CD8-positive, alpha-beta T cell (primary cell): ENCODE measurements at regions of chr6 and their contacts with region 1.

Region 1: DNA sequence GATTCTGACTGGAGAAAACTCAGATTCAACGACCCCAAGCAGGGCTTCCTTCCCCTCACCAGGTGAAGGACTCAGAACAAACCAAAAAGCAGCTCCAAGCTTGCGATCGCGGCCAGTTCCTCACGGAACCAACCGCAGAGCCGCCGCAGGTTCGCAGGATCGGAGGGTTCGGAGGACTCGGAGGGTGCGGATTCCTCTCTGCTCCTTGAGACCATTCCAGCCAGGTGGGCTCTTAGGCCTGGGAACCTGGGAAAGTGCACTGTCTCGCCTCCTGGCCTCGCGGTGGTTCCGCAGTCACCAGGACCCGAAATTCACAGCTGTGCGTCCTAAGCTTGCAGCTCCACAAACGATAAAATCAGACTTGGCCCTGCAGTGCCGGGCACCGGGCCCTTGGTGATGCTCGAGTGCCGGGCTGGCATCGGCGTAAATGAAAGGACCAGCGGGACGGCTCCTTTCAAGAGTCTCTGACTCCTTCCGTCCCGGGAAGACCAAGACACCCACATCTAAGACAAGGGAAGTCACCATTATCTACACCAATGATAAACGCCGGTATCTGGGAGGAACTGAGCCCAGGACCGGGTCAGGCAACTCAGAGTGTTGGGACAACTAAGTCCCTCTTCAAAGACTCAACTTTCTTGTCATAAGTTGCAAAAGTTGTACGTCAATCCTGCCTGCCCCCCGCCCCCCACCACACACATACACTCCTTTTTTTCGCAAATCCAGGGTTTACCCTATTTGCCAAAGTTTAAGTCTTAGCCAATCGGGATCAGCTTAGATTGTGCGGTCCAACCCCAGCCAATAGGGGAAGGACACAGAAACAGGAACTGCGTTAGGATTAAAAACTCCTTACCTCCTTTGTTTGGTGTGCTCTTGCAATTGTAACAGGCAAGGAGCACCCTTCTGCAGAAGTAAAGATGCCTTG is 69.8 kb upstream of the PRSS16 start:
- DNase-seq: peak; percentile 46 to 89 (median 72)
- ATAC-seq: peak; percentile 69
- H3K4me3 ChIP-seq: peak overlapping the region; percentile 95 to 100
- H3K4me3 Mint-ChIP-seq: peak overlapping the region; percentile 93
- H3K27ac ChIP-seq: peak overlapping the region; percentile 48 to 68
- H3K27ac Mint-ChIP-seq: peak overlapping the region; percentile 91
- H3K4me1 ChIP-seq: no peaks in the 10 kb centered on the region
- H3K4me1 Mint-ChIP-seq: peaks cover 17% of the 10 kb centered on the region
- H3K27me3 ChIP-seq: no peaks in the 10 kb centered on the region
- H3K27me3 Mint-ChIP-seq: peaks cover 3% of the 10 kb centered on the region
- CTCF ChIP-seq: peak; percentile 11

Region 2: DNA sequence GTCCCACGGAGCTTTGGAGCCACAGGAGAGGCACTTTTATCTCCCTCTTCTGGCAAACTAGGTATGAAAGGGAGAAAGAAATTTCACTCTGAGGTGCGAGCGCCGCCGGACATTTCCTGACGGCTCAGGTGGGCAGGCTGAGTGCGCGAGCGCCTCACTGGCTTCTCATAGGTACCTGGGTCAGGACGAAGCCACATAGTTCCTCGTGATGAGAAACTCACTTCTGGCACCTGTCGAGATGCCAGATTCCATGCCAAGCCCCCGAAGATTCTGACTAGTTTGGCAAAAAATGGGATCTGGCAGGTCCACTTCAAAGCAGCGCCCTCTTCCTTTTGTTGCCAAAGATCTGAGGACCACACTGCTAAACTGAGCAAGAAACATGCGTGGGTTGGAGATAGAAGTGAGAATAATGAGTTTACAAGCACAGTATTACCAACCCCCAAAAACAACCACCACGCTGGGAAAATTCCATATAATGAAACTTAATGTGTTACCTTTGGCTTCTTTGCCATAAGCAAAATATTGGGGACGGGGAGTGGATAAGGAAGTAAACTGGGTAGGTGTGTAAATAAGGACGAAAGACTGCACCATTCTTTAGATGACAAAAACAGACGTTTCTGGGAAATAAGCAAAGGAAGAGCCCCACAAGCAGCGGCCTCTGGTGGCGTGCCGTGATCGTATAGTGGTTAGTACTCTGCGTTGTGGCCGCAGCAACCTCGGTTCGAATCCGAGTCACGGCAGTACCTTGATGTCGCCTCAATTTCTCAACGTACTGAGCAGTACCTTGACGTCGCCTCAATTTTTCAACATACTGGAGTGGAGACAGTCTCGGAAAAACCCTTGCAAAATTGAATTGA is 20.1 kb before region 1 on chr6:
- CTCF ChIA-PET with region 1: interaction called, 30 read pairs
- POLR2A ChIA-PET with region 1: no interaction called
- intact Hi-C with region 1: loop called (anchors 1 kb)
- DNase-seq: peak; percentile 72 to 91 (median 86)
- ATAC-seq: peak; percentile 75
- H3K4me3 ChIP-seq: peak overlapping the region; percentile 55 to 60
- H3K4me3 Mint-ChIP-seq: peak overlapping the region; percentile 85
- H3K27ac ChIP-seq: peak overlapping the region; percentile 18 to 23
- H3K27ac Mint-ChIP-seq: peak overlapping the region; percentile 87
- H3K4me1 ChIP-seq: peaks cover 13% of the 10 kb centered on the region
- H3K4me1 Mint-ChIP-seq: peaks cover 38% of the 10 kb centered on the region
- H3K27me3 ChIP-seq: no peaks in the 10 kb centered on the region
- H3K27me3 Mint-ChIP-seq: no peaks in the 10 kb centered on the region
- CTCF ChIP-seq: peak; percentile 48

Region 3: DNA sequence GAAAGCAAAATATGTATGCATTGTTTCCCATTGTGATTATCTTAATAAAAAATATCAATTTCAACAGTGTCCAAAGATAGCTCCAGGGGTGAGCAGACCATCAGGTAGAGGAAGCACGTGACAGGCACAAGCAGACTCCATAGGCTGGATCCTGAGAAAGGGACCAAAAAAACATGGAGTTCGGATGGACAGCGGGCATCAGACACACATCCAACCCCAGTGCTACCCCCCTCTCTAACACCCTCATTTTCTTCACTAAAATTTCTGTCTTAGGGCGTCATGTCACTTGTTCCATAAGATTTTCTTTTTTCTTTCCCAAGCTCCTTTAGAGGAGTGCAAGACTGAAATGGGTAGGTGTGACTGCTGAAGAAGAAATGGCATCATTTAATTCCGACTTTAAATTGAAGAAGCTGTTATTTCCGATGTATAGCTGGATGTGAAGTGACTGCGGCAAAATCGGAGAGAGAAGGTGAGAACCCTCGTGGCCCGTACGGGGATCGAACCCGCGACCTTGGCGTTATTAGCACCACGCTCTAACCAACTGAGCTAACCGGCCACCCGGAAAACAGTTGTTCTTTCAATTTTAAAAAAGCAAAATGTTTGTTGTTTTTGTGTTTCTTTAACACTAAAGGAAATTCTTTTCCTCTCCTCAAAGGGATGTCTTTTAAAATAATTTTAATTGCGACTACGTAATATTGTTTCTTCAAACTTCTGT is 59.5 kb after region 1 on chr6:
- CTCF ChIA-PET with region 1: no interaction called
- POLR2A ChIA-PET with region 1: no interaction called
- intact Hi-C with region 1: no loop called
- DNase-seq: peak in 3 of 9 experiments; percentile 13 to 50 (median 30)
- ATAC-seq: no peak
- H3K4me3 ChIP-seq: no peak overlapping the region
- H3K4me3 Mint-ChIP-seq: no peak overlapping the region
- H3K27ac ChIP-seq: no peak overlapping the region
- H3K27ac Mint-ChIP-seq: peak overlapping the region; percentile 18
- H3K4me1 ChIP-seq: no peaks in the 10 kb centered on the region
- H3K4me1 Mint-ChIP-seq: peaks cover 10% of the 10 kb centered on the region
- H3K27me3 ChIP-seq: peaks cover 31 to 44% of the 10 kb centered on the region in 2 experiments
- H3K27me3 Mint-ChIP-seq: peaks cover 69% of the 10 kb centered on the region
- CTCF ChIP-seq: no peak

Region 4: DNA sequence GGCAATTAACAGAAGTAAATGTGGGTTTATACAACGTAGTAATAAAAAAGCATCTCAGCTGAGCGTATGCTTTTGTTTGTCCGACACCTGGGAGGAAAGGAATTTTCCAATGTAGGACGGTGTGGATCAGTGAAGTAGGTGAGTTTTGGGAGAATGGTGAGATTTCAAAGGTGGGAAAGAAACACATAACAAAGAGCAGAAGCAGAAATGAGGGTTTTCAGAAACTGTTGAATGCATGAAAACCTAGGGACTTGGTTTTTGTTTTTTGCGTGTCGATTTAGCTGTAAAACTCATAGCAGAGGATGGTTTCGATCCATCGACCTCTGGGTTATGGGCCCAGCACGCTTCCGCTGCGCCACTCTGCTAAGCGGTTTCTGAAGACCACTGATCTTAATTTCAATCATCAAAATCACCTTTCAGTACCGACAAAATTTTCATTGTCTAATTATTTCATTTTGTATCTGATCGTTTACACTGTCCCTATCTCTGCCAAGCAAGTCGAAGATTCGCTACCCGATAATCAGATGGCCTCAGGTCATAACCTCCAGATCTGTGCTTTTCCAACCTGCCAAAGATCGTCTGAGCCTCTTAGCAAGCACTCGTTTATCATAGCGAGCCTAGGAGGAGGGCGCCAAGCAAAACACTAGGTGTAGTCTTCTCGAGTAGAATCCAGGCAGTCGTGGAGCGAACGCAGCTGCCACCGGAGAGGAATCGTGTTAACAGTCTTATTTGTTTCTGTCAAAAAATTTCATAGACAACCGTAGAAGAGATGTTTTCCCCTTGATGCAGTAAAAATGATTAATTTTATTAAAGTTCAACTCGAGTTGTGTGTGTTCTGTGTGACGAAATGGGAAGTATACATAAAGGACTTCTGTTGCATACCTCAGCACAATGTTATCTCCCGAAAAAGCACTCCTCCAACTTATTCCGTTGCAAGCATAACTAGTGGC is 155.2 kb after region 1 on chr6:
- CTCF ChIA-PET with region 1: no interaction called
- POLR2A ChIA-PET with region 1: no interaction called
- intact Hi-C with region 1: loop called in 1 of 2 experiments (anchors 5 kb)
- DNase-seq: peak in 8 of 9 experiments; percentile 12 to 78 (median 60)
- ATAC-seq: peak; percentile 86
- H3K4me3 ChIP-seq: peak overlapping the region; percentile 53
- H3K4me3 Mint-ChIP-seq: peak overlapping the region; percentile 87
- H3K27ac ChIP-seq: no peak overlapping the region
- H3K27ac Mint-ChIP-seq: peak overlapping the region; percentile 82
- H3K4me1 ChIP-seq: no peaks in the 10 kb centered on the region
- H3K4me1 Mint-ChIP-seq: peaks cover 15% of the 10 kb centered on the region
- H3K27me3 ChIP-seq: peaks cover 0 to 4% of the 10 kb centered on the region in 2 experiments
- H3K27me3 Mint-ChIP-seq: peaks cover 21% of the 10 kb centered on the region
- CTCF ChIP-seq: no peak

Region 5: GRCh38 chr6:27479319-27480182 is 301.8 kb after region 1 on chr6:
- CTCF ChIA-PET with region 1: interaction called, 3 read pairs
- POLR2A ChIA-PET with region 1: interaction called, 7 read pairs
- intact Hi-C with region 1: loop called (anchors 1 to 5 kb)
- DNase-seq: peak; percentile 83 to 97 (median 87)
- ATAC-seq: peak; percentile 69
- H3K4me3 ChIP-seq: peak overlapping the region; percentile 79 to 96
- H3K4me3 Mint-ChIP-seq: no peak overlapping the region
- H3K27ac ChIP-seq: peak overlapping the region; percentile 96 to 99
- H3K27ac Mint-ChIP-seq: no peak overlapping the region
- H3K4me1 ChIP-seq: peaks cover 13% of the 10 kb centered on the region
- H3K4me1 Mint-ChIP-seq: peaks cover 9% of the 10 kb centered on the region
- H3K27me3 ChIP-seq: no peaks in the 10 kb centered on the region
- H3K27me3 Mint-ChIP-seq: no peaks in the 10 kb centered on the region
- CTCF ChIP-seq: no peak

Region 6: DNA sequence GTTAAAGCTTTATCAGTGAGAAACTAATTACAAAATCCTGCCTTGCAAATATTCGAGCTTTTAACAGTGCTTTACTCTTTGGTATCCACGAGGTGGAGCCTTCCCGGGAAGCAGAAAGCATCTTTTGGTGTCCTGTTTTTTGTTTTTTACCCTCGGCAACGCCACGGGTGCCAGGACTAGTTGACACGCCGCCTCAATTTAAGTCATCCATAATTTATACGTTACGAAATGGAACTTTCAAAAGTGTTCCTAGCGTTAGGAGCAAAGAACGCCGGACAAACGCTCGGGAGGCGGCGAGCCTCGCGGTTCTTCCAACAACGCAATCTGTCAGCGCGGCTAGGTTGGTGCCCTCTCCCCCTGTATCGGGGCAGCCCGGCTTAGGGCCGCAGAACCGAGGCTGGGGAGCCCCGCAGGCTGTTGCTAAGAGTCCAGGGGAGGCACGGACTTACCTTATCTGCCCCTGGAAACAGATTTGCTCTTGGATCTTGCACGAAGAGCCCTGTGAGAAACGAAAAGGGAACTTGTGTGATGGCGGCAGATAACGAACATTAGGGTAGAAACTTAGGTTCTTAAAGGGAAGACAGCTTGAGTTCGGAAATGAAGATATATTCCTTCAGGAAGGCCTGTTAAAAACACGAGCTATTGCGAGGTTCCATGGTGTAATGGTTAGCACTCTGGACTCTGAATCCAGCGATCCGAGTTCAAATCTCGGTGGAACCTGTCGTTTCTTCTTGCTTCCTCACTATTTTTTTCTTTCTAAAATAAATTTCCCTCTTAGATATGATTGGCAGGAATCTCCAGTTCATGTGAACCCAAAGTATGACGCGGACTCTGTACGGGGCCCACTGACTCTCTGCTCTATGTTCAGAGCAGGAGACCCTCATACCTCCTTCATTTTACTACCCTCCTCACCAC is 341.4 kb after region 1 on chr6:
- CTCF ChIA-PET with region 1: interaction called, 3 read pairs
- POLR2A ChIA-PET with region 1: no interaction called
- intact Hi-C with region 1: loop called in 1 of 2 experiments (anchors 5 kb)
- DNase-seq: peak; percentile 29 to 88 (median 61)
- ATAC-seq: peak; percentile 78
- H3K4me3 ChIP-seq: peak overlapping the region; percentile 74 to 88
- H3K4me3 Mint-ChIP-seq: peak overlapping the region; percentile 83
- H3K27ac ChIP-seq: peak overlapping the region; percentile 59 to 72
- H3K27ac Mint-ChIP-seq: peak overlapping the region; percentile 83
- H3K4me1 ChIP-seq: peaks cover 10% of the 10 kb centered on the region
- H3K4me1 Mint-ChIP-seq: peaks cover 19% of the 10 kb centered on the region
- H3K27me3 ChIP-seq: peaks cover 0 to 9% of the 10 kb centered on the region in 2 experiments
- H3K27me3 Mint-ChIP-seq: peaks cover 18% of the 10 kb centered on the region
- CTCF ChIP-seq: peak; percentile 77

Region 7: DNA sequence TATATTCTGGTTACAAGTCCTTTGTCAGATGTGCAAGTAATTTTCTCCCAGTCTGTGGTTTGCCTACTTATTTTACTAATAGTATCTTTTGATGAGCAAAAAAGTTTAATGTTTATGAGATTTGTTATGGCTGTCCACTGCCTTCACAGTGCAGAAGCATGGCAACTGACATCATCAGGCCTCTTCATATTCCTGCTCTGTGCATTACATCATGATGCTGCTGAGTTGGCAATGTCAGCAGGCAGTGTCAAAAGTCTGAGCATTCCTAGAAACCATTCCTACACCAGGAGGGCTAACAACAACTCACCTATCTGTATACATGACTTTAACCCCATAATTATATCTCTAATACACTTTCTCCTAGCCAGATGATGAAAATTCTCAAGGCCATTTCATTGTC is 745.2 kb after region 1 on chr6:
- CTCF ChIA-PET with region 1: no interaction called
- POLR2A ChIA-PET with region 1: no interaction called
- intact Hi-C with region 1: no loop called
- DNase-seq: no peak
- ATAC-seq: no peak
- H3K4me3 ChIP-seq: no peak overlapping the region
- H3K4me3 Mint-ChIP-seq: no peak overlapping the region
- H3K27ac ChIP-seq: no peak overlapping the region
- H3K27ac Mint-ChIP-seq: no peak overlapping the region
- H3K4me1 ChIP-seq: no peaks in the 10 kb centered on the region
- H3K4me1 Mint-ChIP-seq: no peaks in the 10 kb centered on the region
- H3K27me3 ChIP-seq: peaks cover 6 to 8% of the 10 kb centered on the region in 2 experiments
- H3K27me3 Mint-ChIP-seq: peaks cover 19% of the 10 kb centered on the region
- CTCF ChIP-seq: no peak

Region 8: DNA sequence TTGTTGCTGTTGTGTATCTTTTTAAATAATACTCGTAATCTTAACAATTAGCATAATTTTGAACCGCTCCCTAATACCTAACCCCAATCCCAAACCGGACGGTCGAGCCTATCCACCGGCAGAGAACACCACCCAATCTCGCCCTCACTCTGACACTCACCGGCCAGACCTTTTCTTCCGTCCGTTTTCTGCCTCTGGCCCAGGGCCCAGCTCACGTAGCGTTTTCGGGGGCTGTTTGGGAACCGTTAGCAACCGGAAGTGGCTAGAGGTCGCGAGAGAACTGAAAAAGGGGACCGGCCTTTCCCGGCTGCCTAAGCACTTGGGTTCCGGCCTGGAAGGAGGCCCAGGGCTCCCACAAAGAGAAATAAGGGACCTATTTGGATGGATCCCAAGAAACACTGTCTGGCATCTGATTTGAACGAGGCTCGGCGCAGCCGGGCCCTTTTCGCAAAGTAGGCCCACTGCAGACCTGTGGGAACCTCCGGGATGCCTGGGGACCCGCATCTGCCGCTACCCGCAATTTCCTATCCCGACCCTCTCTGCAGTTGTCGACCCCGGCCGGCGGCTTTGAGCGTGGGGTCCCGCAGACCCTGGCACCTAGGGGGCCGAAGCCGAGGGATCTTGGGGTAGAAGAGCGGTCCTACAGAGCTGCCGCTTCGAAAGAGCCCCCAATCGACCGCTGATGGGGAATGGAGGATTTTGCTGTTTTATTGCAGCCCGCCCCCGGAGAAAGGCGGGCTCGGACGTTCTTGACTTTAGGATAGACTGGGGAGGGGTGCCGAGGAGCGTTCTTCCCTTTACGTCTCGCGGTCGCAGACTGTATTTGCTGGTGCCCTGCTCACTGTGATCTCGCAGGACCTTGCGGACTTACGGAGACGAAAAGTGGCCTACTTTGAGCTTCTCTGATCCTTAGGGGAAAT is 959.1 kb after region 1 on chr6:
- CTCF ChIA-PET with region 1: no interaction called
- POLR2A ChIA-PET with region 1: no interaction called
- intact Hi-C with region 1: loop called in 1 of 2 experiments (anchors 5 kb)
- DNase-seq: peak; percentile 52 to 91 (median 77)
- ATAC-seq: peak; percentile 35
- H3K4me3 ChIP-seq: peak overlapping the region; percentile 79 to 88
- H3K4me3 Mint-ChIP-seq: peak overlapping the region; percentile 94
- H3K27ac ChIP-seq: peak overlapping the region; percentile 87 to 92
- H3K27ac Mint-ChIP-seq: peak overlapping the region; percentile 99
- H3K4me1 ChIP-seq: peaks cover 28% of the 10 kb centered on the region
- H3K4me1 Mint-ChIP-seq: peaks cover 71% of the 10 kb centered on the region
- H3K27me3 ChIP-seq: no peaks in the 10 kb centered on the region
- H3K27me3 Mint-ChIP-seq: no peaks in the 10 kb centered on the region
- CTCF ChIP-seq: no peak

Region 9: GRCh38 chr6:28981833-28982475 is 1804.2 kb after region 1 on chr6:
- CTCF ChIA-PET with region 1: no interaction called
- POLR2A ChIA-PET with region 1: interaction called, 3 read pairs
- intact Hi-C with region 1: loop called in 1 of 2 experiments (anchors 10 kb)
- DNase-seq: peak; percentile 43 to 89 (median 70)
- ATAC-seq: peak; percentile 69
- H3K4me3 ChIP-seq: peak overlapping the region; percentile 94 to 98
- H3K4me3 Mint-ChIP-seq: peak overlapping the region; percentile 89
- H3K27ac ChIP-seq: peak overlapping the region; percentile 14 to 59
- H3K27ac Mint-ChIP-seq: peak overlapping the region; percentile 91
- H3K4me1 ChIP-seq: peaks cover 17% of the 10 kb centered on the region
- H3K4me1 Mint-ChIP-seq: peaks cover 59% of the 10 kb centered on the region
- H3K27me3 ChIP-seq: peaks cover 0 to 6% of the 10 kb centered on the region in 2 experiments
- H3K27me3 Mint-ChIP-seq: peaks cover 34% of the 10 kb centered on the region
- CTCF ChIP-seq: no peak